ENCODE measurements at regions of chr6 and their contacts with region 1.

Region 1: GRCh38 chr6:41941280-41942066 is at the start of gene CCND3:
- DNase-seq: peak; percentile 91 to 93 (median 91)
- H3K4me3 ChIP-seq: peak within 1 kb of the TSS; percentile 84 to 97 (median 84)
- H3K4me3 Mint-ChIP-seq: peak within 1 kb of the TSS; percentile 95 to 97
- H3K27ac ChIP-seq: peak within 1 kb of the TSS; percentile 80 to 81
- H3K27ac Mint-ChIP-seq: peak within 1 kb of the TSS; percentile 90 to 99 (median 98)
- H3K4me1 ChIP-seq: peaks cover 62 to 74% of the 10 kb centered on the region in 2 donors
- H3K4me1 Mint-ChIP-seq: peaks cover 61% of the 10 kb centered on the region
- H3K27me3 ChIP-seq: no peaks in the 10 kb centered on the region
- H3K27me3 Mint-ChIP-seq: peaks cover 0 to 2% (median 0%) of the 10 kb centered on the region in 3 donors
- CTCF ChIP-seq: no peak
- polyA plus RNA-seq, gene CCND3: 166 to 273 (median 259) TPM

Region 2: GRCh38 chr6:41505122-41506049 is 436.1 kb before region 1 on chr6:
- intact Hi-C with region 1: no loop called
- DNase-seq: no peak
- H3K4me3 ChIP-seq: no peak overlapping the region
- H3K4me3 Mint-ChIP-seq: peak overlapping the region in 1 of 2 donors; percentile 62
- H3K27ac ChIP-seq: no peak overlapping the region
- H3K27ac Mint-ChIP-seq: no peak overlapping the region
- H3K4me1 ChIP-seq: peaks cover 0 to 4% of the 10 kb centered on the region in 2 donors
- H3K4me1 Mint-ChIP-seq: peaks cover 18% of the 10 kb centered on the region
- H3K27me3 ChIP-seq: peaks cover 46 to 66% of the 10 kb centered on the region in 2 donors
- H3K27me3 Mint-ChIP-seq: peaks cover 63 to 82% (median 67%) of the 10 kb centered on the region in 3 donors
- CTCF ChIP-seq: no peak

Region 3: DNA sequence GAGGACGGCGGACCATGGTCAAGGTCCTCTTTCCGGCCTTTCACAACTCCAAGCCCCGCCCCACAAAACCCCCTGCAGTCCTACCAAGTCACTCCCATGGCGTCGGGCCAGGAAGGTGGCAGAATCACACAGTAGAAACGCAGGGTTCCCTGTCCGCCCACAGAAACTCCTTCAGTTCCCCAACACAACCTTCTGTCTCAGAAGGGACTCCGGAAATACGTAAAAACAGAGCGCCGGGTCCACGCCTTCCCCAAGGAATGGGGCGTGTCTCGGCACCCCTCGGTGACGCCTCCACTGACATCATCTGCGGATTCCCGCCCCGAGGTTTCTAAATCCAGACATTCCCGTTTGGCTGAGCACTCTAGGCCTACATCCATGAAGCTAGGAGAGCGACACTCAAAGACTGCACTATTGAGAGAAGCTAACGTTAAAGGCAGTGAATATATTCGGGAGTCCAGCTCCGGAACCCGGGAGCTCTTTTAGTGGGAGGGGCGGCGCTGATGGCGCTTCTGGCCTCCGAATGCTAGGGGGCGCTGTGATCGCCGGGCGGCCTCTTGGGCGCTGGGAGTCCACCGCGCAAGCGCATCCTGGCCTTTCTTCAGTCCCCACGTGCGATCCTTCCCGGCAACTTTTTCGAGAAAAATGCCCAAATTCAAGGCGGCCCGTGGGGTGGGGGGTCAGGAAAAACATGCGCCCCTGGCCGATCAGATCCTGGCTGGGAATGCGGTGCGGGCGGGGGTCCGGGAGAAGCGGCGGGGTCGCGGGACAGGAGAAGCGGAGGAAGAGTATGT is 20.4 kb before region 1 on chr6 and contains the starts of genes BYSL and MED20:
- intact Hi-C with region 1: loop called in 1 of 2 experiments (anchors 2 kb)
- DNase-seq: peak; percentile 96 to 99 (median 97)
- H3K4me3 ChIP-seq: peak within 1 kb of the TSS; percentile 78 to 91 (median 81)
- H3K4me3 Mint-ChIP-seq: peak within 1 kb of the TSS; percentile 98 to 100
- H3K27ac ChIP-seq: peak within 1 kb of the TSS; percentile 90 to 92
- H3K27ac Mint-ChIP-seq: peak within 1 kb of the TSS; percentile 98 to 100 (median 100)
- H3K4me1 ChIP-seq: peaks cover 28 to 42% of the 10 kb centered on the region in 2 donors
- H3K4me1 Mint-ChIP-seq: peaks cover 38% of the 10 kb centered on the region
- H3K27me3 ChIP-seq: no peaks in the 10 kb centered on the region
- H3K27me3 Mint-ChIP-seq: peaks cover 0 to 6% (median 1%) of the 10 kb centered on the region in 3 donors
- CTCF ChIP-seq: peak; percentile 99
- polyA plus RNA-seq, gene BYSL: 2.7 to 4.2 (median 3.9) TPM
- polyA plus RNA-seq, gene MED20: 6.3 to 16.2 (median 13.6) TPM

Region 4: GRCh38 chr6:41970436-41970846 is 29.0 kb after region 1 on chr6:
- intact Hi-C with region 1: loop called in 1 of 2 experiments (anchors 2 kb)
- DNase-seq: peak; percentile 92 to 97 (median 95)
- H3K4me3 ChIP-seq: no peak overlapping the region
- H3K4me3 Mint-ChIP-seq: peak overlapping the region in 1 of 2 donors; percentile 31
- H3K27ac ChIP-seq: peak overlapping the region; percentile 50 to 74
- H3K27ac Mint-ChIP-seq: peak overlapping the region; percentile 88 to 98 (median 95)
- H3K4me1 ChIP-seq: peaks cover 33 to 38% of the 10 kb centered on the region in 2 donors
- H3K4me1 Mint-ChIP-seq: peaks cover 37% of the 10 kb centered on the region
- H3K27me3 ChIP-seq: no peaks in the 10 kb centered on the region
- H3K27me3 Mint-ChIP-seq: peaks cover 0 to 2% (median under 1%) of the 10 kb centered on the region in 3 donors
- CTCF ChIP-seq: no peak